ENCODE measurements at regions of chr10 and their contacts with region 1.

Region 1: GRCh38 chr10:100912605-100913469 is at the start of gene SLF2:
- DNase-seq: peak; percentile 96
- ATAC-seq: peak; percentile 95
- H3K4me3 Mint-ChIP-seq: peak within 1 kb of the TSS; percentile 97
- H3K27ac Mint-ChIP-seq: peak within 1 kb of the TSS; percentile 98
- H3K4me1 Mint-ChIP-seq: peaks cover 45% of the 10 kb centered on the region
- H3K27me3 Mint-ChIP-seq: no peaks in the 10 kb centered on the region
- total RNA-seq, gene SLF2: 30.9 to 34.3 TPM

Region 2: GRCh38 chr10:100185364-100186252 is 727.2 kb before region 1 on chr10 and contains the start of gene ERLIN1:
- CTCF ChIA-PET with region 1: no interaction called
- POLR2A ChIA-PET with region 1: no interaction called
- intact Hi-C with region 1: loop called in 1 of 2 experiments (anchors 10 kb)
- DNase-seq: peak; percentile 97
- ATAC-seq: peak; percentile 90
- H3K4me3 Mint-ChIP-seq: peak within 1 kb of the TSS; percentile 97
- H3K27ac Mint-ChIP-seq: peak within 1 kb of the TSS; percentile 97
- H3K4me1 Mint-ChIP-seq: peaks cover 48% of the 10 kb centered on the region
- H3K27me3 Mint-ChIP-seq: no peaks in the 10 kb centered on the region
- total RNA-seq, gene ERLIN1: 15.2 to 18.7 TPM

Region 3: DNA sequence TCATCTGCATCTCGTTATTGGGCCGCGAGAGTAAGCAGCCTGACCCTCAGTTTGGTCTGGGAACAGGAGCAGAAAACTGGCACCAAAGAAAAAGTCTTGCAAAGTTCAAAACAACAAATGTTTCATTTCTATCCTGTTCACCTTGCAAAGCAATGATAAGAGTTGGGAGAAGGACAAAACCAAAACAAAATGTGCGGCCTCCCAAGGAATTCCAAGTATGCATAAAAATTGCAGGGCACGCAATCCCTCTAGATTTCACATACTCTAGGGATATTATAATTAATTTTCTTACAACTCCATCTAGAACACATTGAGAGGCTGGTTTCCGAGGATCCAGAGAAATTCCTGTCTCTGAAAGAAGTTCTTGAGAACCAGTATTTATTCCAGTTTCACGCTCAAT is 703.5 kb before region 1 on chr10:
- CTCF ChIA-PET with region 1: no interaction called
- POLR2A ChIA-PET with region 1: no interaction called
- intact Hi-C with region 1: no loop called
- DNase-seq: no peak
- ATAC-seq: no peak
- H3K4me3 Mint-ChIP-seq: no peak overlapping the region
- H3K27ac Mint-ChIP-seq: no peak overlapping the region
- H3K4me1 Mint-ChIP-seq: peaks cover 1% of the 10 kb centered on the region
- H3K27me3 Mint-ChIP-seq: no peaks in the 10 kb centered on the region

Region 4: DNA sequence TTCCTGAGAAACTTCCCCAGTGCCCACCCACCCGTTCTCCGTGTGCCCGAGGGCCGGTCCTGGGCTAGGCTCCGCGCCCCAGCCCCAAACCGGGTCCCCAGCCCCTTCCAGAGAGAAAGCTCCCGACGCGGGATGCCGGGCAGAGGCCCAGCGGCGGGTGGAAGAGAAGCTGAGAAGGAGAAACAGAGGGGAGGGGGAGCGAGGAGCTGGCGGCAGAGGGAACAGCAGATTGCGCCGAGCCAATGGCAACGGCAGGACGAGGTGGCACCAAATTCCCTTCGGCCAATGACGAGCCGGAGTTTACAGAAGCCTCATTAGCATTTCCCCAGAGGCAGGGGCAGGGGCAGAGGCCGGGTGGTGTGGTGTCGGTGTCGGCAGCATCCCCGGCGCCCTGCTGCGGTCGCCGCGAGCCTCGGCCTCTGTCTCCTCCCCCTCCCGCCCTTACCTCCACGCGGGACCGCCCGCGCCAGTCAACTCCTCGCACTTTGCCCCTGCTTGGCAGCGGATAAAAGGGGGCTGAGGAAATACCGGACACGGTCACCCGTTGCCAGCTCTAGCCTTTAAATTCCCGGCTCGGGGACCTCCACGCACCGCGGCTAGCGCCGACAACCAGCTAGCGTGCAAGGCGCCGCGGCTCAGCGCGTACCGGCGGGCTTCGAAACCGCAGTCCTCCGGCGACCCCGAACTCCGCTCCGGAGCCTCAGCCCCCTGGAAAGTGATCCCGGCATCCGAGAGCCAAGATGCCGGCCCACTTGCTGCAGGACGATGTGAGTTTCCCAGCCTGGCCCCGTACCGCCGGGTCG is 565.9 kb before region 1 on chr10 and contains the start of gene SCD:
- CTCF ChIA-PET with region 1: no interaction called
- POLR2A ChIA-PET with region 1: no interaction called
- intact Hi-C with region 1: loop called in 1 of 2 experiments (anchors 2 kb)
- DNase-seq: peak; percentile 94
- ATAC-seq: peak; percentile 92
- H3K4me3 Mint-ChIP-seq: peak within 1 kb of the TSS; percentile 88
- H3K27ac Mint-ChIP-seq: peak within 1 kb of the TSS; percentile 91
- H3K4me1 Mint-ChIP-seq: peaks cover 44% of the 10 kb centered on the region
- H3K27me3 Mint-ChIP-seq: no peaks in the 10 kb centered on the region
- total RNA-seq, gene SCD: 203 to 206 TPM

Region 5: GRCh38 chr10:100697070-100697469 is 215.8 kb before region 1 on chr10:
- CTCF ChIA-PET with region 1: no interaction called
- POLR2A ChIA-PET with region 1: no interaction called
- intact Hi-C with region 1: no loop called
- DNase-seq: peak; percentile 65
- ATAC-seq: peak; percentile 75
- H3K4me3 Mint-ChIP-seq: no peak overlapping the region
- H3K27ac Mint-ChIP-seq: no peak overlapping the region
- H3K4me1 Mint-ChIP-seq: peaks cover 10% of the 10 kb centered on the region
- H3K27me3 Mint-ChIP-seq: peaks cover 20% of the 10 kb centered on the region

Region 6: DNA sequence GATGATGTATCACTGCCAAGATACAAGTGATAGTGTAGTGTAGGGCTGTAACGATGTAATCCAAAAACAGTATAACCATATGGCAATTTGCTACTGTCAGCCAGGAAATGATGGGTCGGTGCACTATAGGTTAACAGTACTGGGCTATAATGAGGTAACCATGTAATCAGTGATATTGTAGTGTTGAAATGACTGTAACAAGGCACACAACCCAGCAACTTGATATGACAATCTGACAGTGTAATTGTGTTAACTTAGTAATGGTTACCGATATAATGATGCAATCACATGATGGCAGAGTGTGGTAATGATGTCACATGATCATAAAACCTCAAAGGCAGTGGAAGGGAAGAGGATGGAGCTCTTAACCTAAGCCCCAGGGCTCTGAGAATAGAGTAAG is 73.9 kb before region 1 on chr10:
- CTCF ChIA-PET with region 1: no interaction called
- POLR2A ChIA-PET with region 1: no interaction called
- intact Hi-C with region 1: no loop called
- DNase-seq: no peak
- ATAC-seq: peak; percentile 92
- H3K4me3 Mint-ChIP-seq: no peak overlapping the region
- H3K27ac Mint-ChIP-seq: no peak overlapping the region
- H3K4me1 Mint-ChIP-seq: no peaks in the 10 kb centered on the region
- H3K27me3 Mint-ChIP-seq: peaks cover 15% of the 10 kb centered on the region

Region 7: GRCh38 chr10:100939763-100940344 is 27.0 kb after region 1 on chr10:
- CTCF ChIA-PET with region 1: interaction called, 5 read pairs
- POLR2A ChIA-PET with region 1: no interaction called
- intact Hi-C with region 1: loop called in 1 of 2 experiments (anchors 1 kb)
- DNase-seq: no peak
- ATAC-seq: no peak
- H3K4me3 Mint-ChIP-seq: no peak overlapping the region
- H3K27ac Mint-ChIP-seq: no peak overlapping the region
- H3K4me1 Mint-ChIP-seq: peaks cover 14% of the 10 kb centered on the region
- H3K27me3 Mint-ChIP-seq: no peaks in the 10 kb centered on the region

Region 8: GRCh38 chr10:101031128-101031795 is 118.4 kb after region 1 on chr10 and contains the starts of genes PDZD7 and SFXN3:
- CTCF ChIA-PET with region 1: no interaction called
- POLR2A ChIA-PET with region 1: no interaction called
- intact Hi-C with region 1: loop called in 1 of 2 experiments (anchors 1 kb)
- DNase-seq: peak; percentile 98
- ATAC-seq: peak; percentile 85
- H3K4me3 Mint-ChIP-seq: peak within 1 kb of the TSS; percentile 80
- H3K27ac Mint-ChIP-seq: peak within 1 kb of the TSS; percentile 82
- H3K4me1 Mint-ChIP-seq: peaks cover 22% of the 10 kb centered on the region
- H3K27me3 Mint-ChIP-seq: no peaks in the 10 kb centered on the region
- total RNA-seq, gene PDZD7: 0.28 to 0.32 TPM
- total RNA-seq, gene SFXN3: 30.0 to 37.7 TPM

Measured in activated CD4-positive, alpha-beta T cell treated with anti-CD3 and anti-CD28 coated beads for 36 hours (primary cell).